Left lung (tissue), 14 donors: ENCODE measurements at regions of chr2 and their contacts with region 1.

Region 1: DNA sequence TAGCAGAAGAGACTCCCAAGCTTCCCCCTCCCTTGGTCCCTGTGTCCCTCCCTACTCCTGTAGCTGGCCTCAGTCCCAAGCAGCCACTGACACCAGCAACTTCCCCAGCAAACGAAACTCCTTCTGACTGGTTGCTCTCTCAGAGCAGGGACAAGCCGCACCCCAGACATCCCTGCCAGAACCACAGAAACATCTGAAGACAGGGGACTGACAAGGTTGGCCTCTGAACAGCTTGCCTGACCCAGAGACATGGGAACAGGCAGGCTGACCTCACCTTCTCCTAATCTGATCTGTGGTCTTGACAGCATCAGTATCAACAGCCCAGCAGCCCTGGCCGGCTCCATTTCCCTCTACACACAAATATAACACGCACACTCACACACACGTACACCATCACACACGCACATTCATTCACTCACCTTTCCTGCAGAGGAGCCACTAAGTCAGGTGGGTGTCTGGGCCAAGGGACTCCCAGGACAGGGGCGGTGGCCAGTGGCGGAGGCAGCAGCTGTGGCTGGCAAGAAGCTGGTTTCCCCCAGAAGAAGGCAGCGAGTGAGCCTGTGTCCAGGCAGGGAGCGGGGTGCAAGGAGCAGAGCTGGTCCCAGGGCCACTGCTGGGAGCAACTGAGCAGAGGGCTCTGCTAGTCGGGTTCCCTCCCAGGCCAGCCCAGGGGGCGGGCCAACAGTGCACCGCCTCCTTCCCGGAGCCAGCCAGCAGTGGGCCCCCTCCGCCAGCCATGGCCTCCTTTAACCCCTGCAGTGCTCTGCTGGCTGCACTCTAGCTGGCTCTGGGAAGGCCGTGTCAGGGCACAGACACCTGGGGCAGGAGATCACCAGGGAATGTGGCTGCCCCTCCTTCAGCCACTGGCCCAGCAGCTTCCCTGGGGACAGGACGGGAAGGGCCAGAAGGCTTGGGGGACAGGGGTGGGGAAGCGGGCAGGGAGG is 59.1 kb downstream of the TNS1 start:
- DNase-seq: peak; percentile 63 to 93 (median 88)
- ATAC-seq: peak; percentile 83
- H3K4me3 ChIP-seq: peak overlapping the region; percentile 67 to 72
- H3K27ac ChIP-seq: peak overlapping the region; percentile 78 to 83
- H3K4me1 ChIP-seq: peaks cover 28 to 52% of the 10 kb centered on the region in 2 donors
- H3K27me3 ChIP-seq: no peaks in the 10 kb centered on the region
- CTCF ChIP-seq: no peak

Region 2: GRCh38 chr2:217988014-217988839 is 44.5 kb after region 1 on chr2:
- intact Hi-C with region 1: loop called in 1 of 2 experiments (anchors 5 kb)
- DNase-seq: peak in 3 of 4 donors; percentile 71 to 91 (median 88)
- ATAC-seq: peak; percentile 91
- H3K4me3 ChIP-seq: no peak overlapping the region
- H3K27ac ChIP-seq: peak overlapping the region; percentile 29 to 75
- H3K4me1 ChIP-seq: peaks cover 15 to 23% of the 10 kb centered on the region in 2 donors
- H3K27me3 ChIP-seq: no peaks in the 10 kb centered on the region
- CTCF ChIP-seq: peak; percentile 90 to 98